ENCODE measurements at regions of chr20 and their contacts with region 1.

Region 1: DNA sequence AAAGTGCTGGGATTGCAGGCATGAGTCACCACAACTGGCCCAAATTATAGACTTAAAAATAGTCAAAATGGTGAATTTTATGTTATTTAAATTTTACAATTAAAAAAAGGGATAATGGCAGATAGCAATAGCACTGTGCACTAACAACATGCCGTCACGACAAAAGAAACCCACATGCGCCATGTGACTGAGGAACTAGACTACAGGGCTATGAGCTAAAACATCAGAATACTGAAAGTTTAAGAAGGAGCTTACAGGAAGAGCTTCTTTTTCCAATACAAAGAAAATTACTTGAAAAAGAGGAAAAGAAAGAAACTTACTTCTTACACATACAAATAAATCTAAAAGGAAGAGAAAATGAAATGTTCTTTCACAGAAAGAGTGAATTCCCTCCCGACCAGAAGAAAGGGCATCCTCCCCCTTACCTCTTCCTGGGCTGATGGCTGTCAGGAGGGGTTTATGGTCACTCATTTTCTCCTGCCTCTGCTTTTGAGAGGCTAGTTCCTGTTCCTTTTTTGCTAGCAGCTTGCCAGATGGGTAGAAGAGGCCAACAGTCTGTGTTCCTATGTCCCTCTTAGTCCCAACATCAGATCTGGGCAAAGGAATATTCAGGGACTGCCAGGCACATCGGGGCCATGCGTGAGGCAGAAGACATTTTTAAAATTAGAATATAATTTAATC is 54.5 kb downstream of the DZANK1 start:
- DNase-seq: no peak
- ATAC-seq: no peak
- H3K4me3 Mint-ChIP-seq: no peak overlapping the region
- H3K27ac Mint-ChIP-seq: no peak overlapping the region
- H3K4me1 Mint-ChIP-seq: peaks cover 3% of the 10 kb centered on the region
- H3K27me3 Mint-ChIP-seq: no peaks in the 10 kb centered on the region

Region 2: DNA sequence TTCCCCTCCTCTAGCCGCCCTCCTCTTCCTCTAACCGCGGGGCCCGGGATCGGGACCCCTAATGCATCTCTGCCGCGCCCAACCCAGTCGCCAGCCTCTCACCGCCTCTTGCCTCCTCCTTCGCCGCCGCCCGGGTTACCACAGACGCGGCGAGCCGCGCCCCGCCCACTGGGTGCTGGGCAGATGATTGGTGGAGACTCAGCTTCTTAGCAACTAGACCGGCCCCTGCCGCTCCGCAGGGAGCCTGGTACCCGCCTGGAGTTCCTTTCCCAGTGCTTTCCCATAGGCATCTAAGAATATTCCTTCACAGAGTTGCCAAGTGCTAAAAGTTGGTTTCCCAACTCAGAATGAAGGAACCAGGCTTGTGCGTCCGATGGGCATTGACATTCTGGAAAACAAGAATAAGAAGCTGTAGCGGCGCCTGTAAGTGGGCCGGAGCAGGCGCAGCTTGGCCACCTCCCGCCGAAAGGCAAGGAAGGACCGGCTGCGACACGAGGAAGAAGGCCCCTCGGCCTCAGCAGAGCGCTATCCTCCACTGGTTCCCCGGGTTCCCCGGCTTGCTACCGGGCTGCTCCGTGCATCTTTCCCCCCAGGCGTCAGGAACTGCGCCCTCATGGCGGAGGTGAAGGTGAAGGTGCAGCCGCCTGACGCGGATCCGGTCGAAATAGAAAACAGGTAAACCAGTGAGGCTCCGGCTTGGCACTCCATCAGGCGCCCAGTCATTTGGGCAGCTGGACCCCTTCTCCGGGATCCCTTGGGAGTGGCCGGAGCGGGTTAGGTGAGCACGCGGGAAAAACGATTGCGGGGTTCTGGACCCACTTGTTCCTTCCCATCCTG is 54.8 kb after region 1 on chr20 and contains the starts of genes DZANK1 and POLR3F:
- CTCF ChIA-PET with region 1: interaction called, 3 read pairs
- POLR2A ChIA-PET with region 1: no interaction called
- intact Hi-C with region 1: loop called in 1 of 2 experiments (anchors 1 kb)
- DNase-seq: peak; percentile 96
- ATAC-seq: peak; percentile 99
- H3K4me3 Mint-ChIP-seq: peak within 1 kb of the TSS; percentile 91
- H3K27ac Mint-ChIP-seq: peak within 1 kb of the TSS; percentile 89
- H3K4me1 Mint-ChIP-seq: peaks cover 21% of the 10 kb centered on the region
- H3K27me3 Mint-ChIP-seq: no peaks in the 10 kb centered on the region
- total RNA-seq, gene DZANK1: 1.4 to 2.0 TPM
- total RNA-seq, gene POLR3F: 9.8 to 11.8 TPM

Region 3: GRCh38 chr20:18507218-18508021 is 95.1 kb after region 1 on chr20 and contains the start of gene SEC23B:
- CTCF ChIA-PET with region 1: interaction called, 3 read pairs
- POLR2A ChIA-PET with region 1: no interaction called
- intact Hi-C with region 1: loop called (anchors 1 to 2 kb)
- DNase-seq: peak; percentile 99
- ATAC-seq: peak; percentile 94
- H3K4me3 Mint-ChIP-seq: peak within 1 kb of the TSS; percentile 99
- H3K27ac Mint-ChIP-seq: peak within 1 kb of the TSS; percentile 100
- H3K4me1 Mint-ChIP-seq: peaks cover 48% of the 10 kb centered on the region
- H3K27me3 Mint-ChIP-seq: no peaks in the 10 kb centered on the region
- total RNA-seq, gene SEC23B: 95.3 to 119 TPM

Region 4: DNA sequence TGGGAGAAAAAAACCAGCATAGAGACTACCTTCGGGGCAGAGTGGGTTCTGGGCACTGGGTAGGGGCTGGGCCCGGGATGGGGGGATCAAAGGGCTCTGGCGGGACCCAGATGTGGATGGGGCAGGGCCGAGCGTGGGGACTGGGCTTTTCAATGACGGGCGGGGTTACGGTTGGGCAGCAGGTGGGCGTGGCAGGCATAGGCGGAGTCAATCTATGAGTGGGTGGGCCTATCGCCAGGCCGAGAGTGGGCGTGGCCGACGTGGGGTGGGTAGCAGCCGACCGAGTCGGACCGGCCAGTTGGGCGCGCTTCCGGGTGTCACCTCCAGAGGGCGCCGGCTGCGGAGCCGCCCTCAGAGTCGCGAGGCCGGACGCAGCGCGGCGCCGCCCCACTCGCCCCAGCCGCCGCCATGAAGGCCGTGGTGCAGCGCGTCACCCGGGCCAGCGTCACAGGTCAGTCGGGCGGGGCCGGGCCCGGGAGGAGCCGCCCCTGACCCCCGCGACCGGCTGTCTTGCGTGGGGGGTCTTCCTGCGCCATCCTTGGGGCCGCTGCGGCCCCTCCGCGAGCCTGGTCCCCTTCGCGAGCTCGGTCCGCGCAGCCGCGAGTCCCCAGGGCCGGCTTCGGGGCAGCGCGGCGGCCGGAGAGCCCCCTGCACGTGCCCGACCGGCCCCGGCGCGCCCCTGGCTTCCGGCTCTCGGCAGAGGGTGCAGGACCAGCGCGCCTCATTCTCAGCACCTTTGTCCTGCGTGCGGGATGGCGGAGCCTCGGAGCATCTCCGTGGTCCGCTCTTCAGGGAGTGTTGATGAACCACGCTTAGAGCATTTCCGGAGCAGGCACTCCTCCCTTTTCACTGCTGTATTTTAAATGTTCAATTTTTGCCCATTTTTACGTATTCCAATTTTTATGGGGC is 175.6 kb after region 1 on chr20 and contains the start of gene DTD1:
- CTCF ChIA-PET with region 1: interaction called, 3 read pairs
- POLR2A ChIA-PET with region 1: no interaction called
- intact Hi-C with region 1: loop called (anchors 2 to 10 kb)
- DNase-seq: peak; percentile 96
- ATAC-seq: peak; percentile 92
- H3K4me3 Mint-ChIP-seq: peak within 1 kb of the TSS; percentile 89
- H3K27ac Mint-ChIP-seq: peak within 1 kb of the TSS; percentile 82
- H3K4me1 Mint-ChIP-seq: peaks cover 25% of the 10 kb centered on the region
- H3K27me3 Mint-ChIP-seq: peaks cover 6% of the 10 kb centered on the region
- total RNA-seq, gene DTD1: 40.7 to 54.6 TPM

Region 5: GRCh38 chr20:18793625-18794427 is 381.5 kb after region 1 on chr20:
- CTCF ChIA-PET with region 1: no interaction called
- POLR2A ChIA-PET with region 1: no interaction called
- intact Hi-C with region 1: loop called in 1 of 2 experiments (anchors 5 kb)
- DNase-seq: peak; percentile 92
- ATAC-seq: peak; percentile 98
- H3K4me3 Mint-ChIP-seq: peak overlapping the region; percentile 87
- H3K27ac Mint-ChIP-seq: peak overlapping the region; percentile 96
- H3K4me1 Mint-ChIP-seq: peaks cover 17% of the 10 kb centered on the region
- H3K27me3 Mint-ChIP-seq: peaks cover 7% of the 10 kb centered on the region

Region 6: GRCh38 chr20:19661717-19662636 is 1249.6 kb after region 1 on chr20:
- CTCF ChIA-PET with region 1: no interaction called
- POLR2A ChIA-PET with region 1: no interaction called
- intact Hi-C with region 1: loop called (anchors 2 to 5 kb)
- DNase-seq: peak; percentile 69
- ATAC-seq: peak; percentile 47
- H3K4me3 Mint-ChIP-seq: no peak overlapping the region
- H3K27ac Mint-ChIP-seq: no peak overlapping the region
- H3K4me1 Mint-ChIP-seq: peaks cover 2% of the 10 kb centered on the region
- H3K27me3 Mint-ChIP-seq: peaks cover 25% of the 10 kb centered on the region

Measured in activated CD4-positive, alpha-beta T cell treated with anti-CD3 and anti-CD28 coated beads for 36 hours (primary cell).